ENCODE measurements at regions of chr14 and their contacts with region 1.

Region 1: GRCh38 chr14:60331201-60332045 is 82.4 kb downstream of the PPM1A start:
- DNase-seq: peak in 1 of 2 donors; percentile 29
- ATAC-seq: peak in 1 of 2 donors; percentile 32
- H3K4me3 ChIP-seq: peak overlapping the region; percentile 26 to 57 (median 44)
- H3K27ac ChIP-seq: peak overlapping the region in 1 of 4 donors; percentile 27
- H3K4me1 ChIP-seq: peaks cover 8 to 10% of the 10 kb centered on the region in 2 donors
- H3K27me3 ChIP-seq: no peaks in the 10 kb centered on the region
- CTCF ChIP-seq: peak; percentile 22 to 67 (median 51)
- POLR2A ChIP-seq: no peak

Region 2: GRCh38 chr14:60064491-60065072 is 266.8 kb before region 1 on chr14:
- in situ Hi-C with region 1: no loop called
- intact Hi-C with region 1: loop called (anchors 10 kb)
- DNase-seq: no peak
- ATAC-seq: peak; percentile 56 to 75
- H3K4me3 ChIP-seq: no peak overlapping the region
- H3K27ac ChIP-seq: no peak overlapping the region
- H3K4me1 ChIP-seq: peaks cover 0 to 4% of the 10 kb centered on the region in 2 donors
- H3K27me3 ChIP-seq: no peaks in the 10 kb centered on the region
- CTCF ChIP-seq: peak; percentile 45 to 90 (median 66)
- POLR2A ChIP-seq: no peak

Region 3: GRCh38 chr14:60195179-60195810 is 136.1 kb before region 1 on chr14:
- in situ Hi-C with region 1: loop called in 1 of 4 experiments (anchors 10 kb)
- intact Hi-C with region 1: no loop called
- DNase-seq: no peak
- ATAC-seq: peak; percentile 71 to 90
- H3K4me3 ChIP-seq: no peak overlapping the region
- H3K27ac ChIP-seq: no peak overlapping the region
- H3K4me1 ChIP-seq: no peaks in the 10 kb centered on the region
- H3K27me3 ChIP-seq: no peaks in the 10 kb centered on the region
- CTCF ChIP-seq: peak in 3 of 5 experiments; percentile 8 to 34 (median 25)
- POLR2A ChIP-seq: no peak

Region 4: DNA sequence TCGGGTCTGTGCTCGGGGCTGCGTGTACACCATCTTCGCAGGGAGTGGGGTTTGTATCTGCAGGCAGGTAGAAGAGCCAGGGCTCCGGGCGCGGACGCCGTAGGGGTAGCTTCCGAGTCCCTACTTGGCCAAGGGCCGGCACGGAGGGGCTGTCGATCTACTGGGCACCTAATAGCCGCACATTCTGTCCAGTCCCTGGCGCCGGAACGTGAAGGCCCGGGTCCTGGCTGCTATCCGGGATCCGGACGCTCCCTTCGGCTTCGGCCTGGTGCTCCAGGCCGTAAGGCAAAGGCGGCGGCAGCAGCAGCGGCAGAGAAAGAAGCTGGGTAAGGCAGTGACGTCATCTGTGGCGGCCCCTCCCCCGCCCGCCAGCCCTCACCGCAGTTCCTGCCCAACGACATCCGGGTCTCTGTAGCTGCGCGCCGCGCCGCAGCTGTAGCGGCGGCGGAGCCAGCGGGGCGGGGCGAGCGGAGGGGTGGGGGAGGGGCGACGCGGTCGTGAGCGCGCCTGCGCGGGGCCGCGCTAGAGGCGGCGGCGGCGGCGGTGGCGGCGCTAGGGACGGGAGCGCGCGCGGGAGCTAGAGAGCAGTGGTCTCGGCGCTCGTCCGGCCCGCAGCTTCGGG is 82.6 kb before region 1 on chr14 and contains the start of gene PPM1A:
- in situ Hi-C with region 1: no loop called
- intact Hi-C with region 1: loop called (anchors 5 kb)
- DNase-seq: peak; percentile 90 to 96
- ATAC-seq: peak; percentile 77 to 80
- H3K4me3 ChIP-seq: peak within 1 kb of the TSS; percentile 77 to 90 (median 88)
- H3K27ac ChIP-seq: peak within 1 kb of the TSS; percentile 97 to 100 (median 100)
- H3K4me1 ChIP-seq: peaks cover 35 to 38% of the 10 kb centered on the region in 2 donors
- H3K27me3 ChIP-seq: no peaks in the 10 kb centered on the region
- CTCF ChIP-seq: peak in 1 of 5 experiments; percentile 21
- POLR2A ChIP-seq: peak; percentile 83 to 95
- total RNA-seq, gene PPM1A: 81.2 to 107 (median 86.1) TPM

Region 5: GRCh38 chr14:60815371-60815770 is 483.9 kb after region 1 on chr14:
- in situ Hi-C with region 1: no loop called
- intact Hi-C with region 1: no loop called
- DNase-seq: no peak
- ATAC-seq: no peak
- H3K4me3 ChIP-seq: no peak overlapping the region
- H3K27ac ChIP-seq: no peak overlapping the region
- H3K4me1 ChIP-seq: peaks cover 10 to 13% of the 10 kb centered on the region in 2 donors
- H3K27me3 ChIP-seq: no peaks in the 10 kb centered on the region
- CTCF ChIP-seq: no peak
- POLR2A ChIP-seq: no peak

Region 6: GRCh38 chr14:61296719-61297502 is 965.5 kb after region 1 on chr14:
- in situ Hi-C with region 1: loop called in 3 of 4 experiments (anchors 25 kb)
- intact Hi-C with region 1: no loop called
- DNase-seq: no peak
- ATAC-seq: peak; percentile 62
- H3K4me3 ChIP-seq: no peak overlapping the region
- H3K27ac ChIP-seq: no peak overlapping the region
- H3K4me1 ChIP-seq: peaks cover 11 to 13% of the 10 kb centered on the region in 2 donors
- H3K27me3 ChIP-seq: no peaks in the 10 kb centered on the region
- CTCF ChIP-seq: peak; percentile 23 to 67 (median 55)
- POLR2A ChIP-seq: no peak

Measured in gastrocnemius medialis (tissue), 4 donors.